ENCODE measurements at regions of chr10 and their contacts with region 1.

Region 1: GRCh38 chr10:17144757-17145156 is 15.1 kb upstream of the CUBN start:
- DNase-seq: no peak
- H3K4me3 ChIP-seq: no peak overlapping the region
- H3K27ac ChIP-seq: no peak overlapping the region
- H3K4me1 ChIP-seq: no peaks in the 10 kb centered on the region
- H3K27me3 ChIP-seq: no peaks in the 10 kb centered on the region
- CTCF ChIP-seq: no peak

Region 2: DNA sequence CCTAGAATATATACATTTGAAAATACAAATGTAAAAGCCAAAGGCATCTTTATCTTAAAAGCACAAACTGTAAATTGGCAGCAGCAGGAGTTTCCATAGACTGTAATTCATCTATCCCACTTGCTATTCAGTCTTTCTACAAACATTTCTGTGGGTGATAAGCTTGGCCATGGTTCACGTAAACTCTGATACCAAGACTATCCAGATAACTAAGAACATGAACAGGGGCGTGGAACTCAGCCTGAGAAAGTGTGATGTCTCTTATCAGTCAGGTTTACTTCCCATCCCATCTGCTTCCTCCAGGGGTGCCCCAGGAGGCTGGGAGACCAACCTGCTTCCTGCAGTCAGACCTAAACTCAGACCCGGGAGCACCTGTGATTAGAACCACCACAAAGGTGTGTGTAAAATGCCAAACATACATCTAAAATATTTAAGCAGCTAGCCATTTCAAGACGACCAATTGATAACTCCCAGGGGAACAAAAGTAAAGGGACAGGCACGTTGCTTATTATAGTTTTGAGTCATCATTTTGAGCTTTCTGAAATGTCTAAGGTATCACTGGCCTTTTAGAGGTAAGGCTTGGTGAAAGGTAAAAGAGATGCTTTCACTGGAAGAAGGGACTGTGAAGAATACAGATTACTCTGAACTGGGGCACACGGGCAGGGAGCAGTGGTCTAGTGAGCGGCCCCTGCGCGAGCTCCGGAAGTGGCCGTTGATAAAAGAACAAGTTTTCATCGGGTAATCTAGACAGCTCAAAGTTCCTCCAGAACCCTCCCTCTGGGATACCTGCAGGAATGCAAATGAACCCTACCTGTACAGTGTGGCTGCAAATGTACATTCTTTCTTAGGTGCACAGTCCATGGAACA is 379.0 kb before region 1 on chr10:
- dilution Hi-C with region 1: no loop called
- DNase-seq: no peak
- H3K4me3 ChIP-seq: no peak overlapping the region
- H3K27ac ChIP-seq: no peak overlapping the region
- H3K4me1 ChIP-seq: no peaks in the 10 kb centered on the region
- H3K27me3 ChIP-seq: no peaks in the 10 kb centered on the region
- CTCF ChIP-seq: no peak

Region 3: DNA sequence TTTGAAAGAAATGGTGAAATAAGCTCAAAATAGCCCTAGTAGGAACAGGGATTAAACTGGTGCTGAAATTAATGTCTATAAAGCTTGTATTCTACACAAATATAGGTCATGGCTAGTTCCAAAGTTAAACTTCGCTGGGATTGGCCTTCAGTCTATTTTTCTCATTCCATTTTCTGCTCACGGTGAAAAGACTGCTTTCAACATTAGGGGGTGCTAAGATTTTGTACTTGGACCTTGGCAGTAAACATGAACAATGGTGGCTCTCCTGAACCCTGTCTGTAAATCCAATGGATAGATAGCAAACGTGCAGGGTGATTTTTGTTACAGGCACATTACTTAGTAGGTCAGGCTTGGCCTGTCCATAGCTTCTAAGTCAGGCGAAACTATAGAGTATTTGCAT is 291.6 kb before region 1 on chr10:
- dilution Hi-C with region 1: loop called (anchors 10 kb)
- DNase-seq: no peak
- H3K4me3 ChIP-seq: no peak overlapping the region
- H3K27ac ChIP-seq: no peak overlapping the region
- H3K4me1 ChIP-seq: peaks cover 23% of the 10 kb centered on the region
- H3K27me3 ChIP-seq: no peaks in the 10 kb centered on the region
- CTCF ChIP-seq: peak in 2 of 3 experiments; percentile 9 to 33